Activated CD8-positive, alpha-beta T cell treated with anti-CD3 and anti-CD28 coated beads for 36 hours (primary cell): ENCODE measurements at regions of chr10 and their contacts with region 1.

Region 1: GRCh38 chr10:91298224-91298871 is 77.9 kb downstream of the PCGF5 start:
- DNase-seq: peak; percentile 86
- ATAC-seq: peak; percentile 95
- H3K4me3 Mint-ChIP-seq: peak overlapping the region; percentile 59
- H3K27ac Mint-ChIP-seq: no peak overlapping the region
- H3K4me1 Mint-ChIP-seq: peaks cover 9% of the 10 kb centered on the region
- H3K27me3 Mint-ChIP-seq: peaks cover 9% of the 10 kb centered on the region
- CTCF ChIP-seq: peak; percentile 92

Region 2: DNA sequence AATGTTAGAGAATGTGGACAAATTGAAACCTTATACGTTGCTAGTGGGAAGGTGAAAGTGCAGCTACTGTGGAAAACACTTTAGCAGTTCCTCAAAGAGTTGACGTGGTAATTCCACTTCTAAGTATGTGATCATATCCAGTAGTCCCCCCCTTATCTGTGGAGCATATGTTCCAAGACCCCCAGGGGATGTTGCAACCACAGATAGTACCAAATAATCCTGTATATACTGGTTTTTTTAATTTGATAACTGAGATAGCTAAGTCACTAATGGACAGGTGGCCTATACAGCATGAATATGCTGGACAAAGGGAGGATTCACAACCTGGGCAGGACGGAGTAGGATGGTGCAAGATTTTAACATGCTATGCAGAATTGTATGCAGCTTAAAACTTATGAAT is 41.0 kb before region 1 on chr10:
- CTCF ChIA-PET with region 1: interaction called, 13 read pairs
- POLR2A ChIA-PET with region 1: no interaction called
- intact Hi-C with region 1: no loop called
- DNase-seq: no peak
- ATAC-seq: no peak
- H3K4me3 Mint-ChIP-seq: no peak overlapping the region
- H3K27ac Mint-ChIP-seq: no peak overlapping the region
- H3K4me1 Mint-ChIP-seq: no peaks in the 10 kb centered on the region
- H3K27me3 Mint-ChIP-seq: no peaks in the 10 kb centered on the region
- CTCF ChIP-seq: no peak

Region 3: DNA sequence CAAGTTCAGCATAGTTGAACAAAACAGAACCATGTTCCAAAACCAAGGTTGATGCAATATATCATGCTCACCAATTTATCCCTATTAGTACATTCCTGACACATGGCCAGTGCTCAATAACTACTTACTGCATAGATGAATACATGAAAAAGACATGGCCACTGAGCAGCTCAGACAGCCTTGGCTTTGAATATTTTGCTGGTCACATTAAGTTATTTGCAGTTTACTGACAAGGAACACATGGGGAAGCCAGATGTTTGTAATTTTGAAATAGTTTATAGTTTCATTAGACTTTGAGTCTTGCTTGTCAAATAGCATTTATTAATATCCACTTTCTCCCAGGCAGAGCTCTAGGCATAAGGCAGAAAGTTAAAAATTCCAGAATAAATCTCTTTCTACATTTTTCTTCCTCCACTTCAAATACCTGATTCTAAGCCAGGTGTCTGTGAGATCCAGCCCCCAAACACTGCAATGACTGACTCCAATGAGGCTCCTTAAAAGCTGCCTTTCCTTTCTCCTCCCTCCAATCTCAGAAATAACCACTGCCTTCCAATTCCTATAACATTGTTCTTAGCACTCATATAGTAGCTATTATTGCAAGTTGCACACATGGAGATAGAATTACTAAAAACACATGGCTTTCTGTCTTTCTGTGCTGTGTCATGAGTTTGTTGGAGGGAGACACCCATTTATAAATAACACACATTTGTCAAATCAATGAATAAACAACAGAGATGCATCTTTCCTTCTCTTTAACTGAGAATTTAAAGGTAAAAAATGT is 13.4 kb after region 1 on chr10:
- CTCF ChIA-PET with region 1: interaction called, 51 read pairs
- POLR2A ChIA-PET with region 1: interaction called, 4 read pairs
- intact Hi-C with region 1: no loop called
- DNase-seq: no peak
- ATAC-seq: no peak
- H3K4me3 Mint-ChIP-seq: no peak overlapping the region
- H3K27ac Mint-ChIP-seq: no peak overlapping the region
- H3K4me1 Mint-ChIP-seq: peaks cover 5% of the 10 kb centered on the region
- H3K27me3 Mint-ChIP-seq: peaks cover 9% of the 10 kb centered on the region
- CTCF ChIP-seq: no peak

Region 4: DNA sequence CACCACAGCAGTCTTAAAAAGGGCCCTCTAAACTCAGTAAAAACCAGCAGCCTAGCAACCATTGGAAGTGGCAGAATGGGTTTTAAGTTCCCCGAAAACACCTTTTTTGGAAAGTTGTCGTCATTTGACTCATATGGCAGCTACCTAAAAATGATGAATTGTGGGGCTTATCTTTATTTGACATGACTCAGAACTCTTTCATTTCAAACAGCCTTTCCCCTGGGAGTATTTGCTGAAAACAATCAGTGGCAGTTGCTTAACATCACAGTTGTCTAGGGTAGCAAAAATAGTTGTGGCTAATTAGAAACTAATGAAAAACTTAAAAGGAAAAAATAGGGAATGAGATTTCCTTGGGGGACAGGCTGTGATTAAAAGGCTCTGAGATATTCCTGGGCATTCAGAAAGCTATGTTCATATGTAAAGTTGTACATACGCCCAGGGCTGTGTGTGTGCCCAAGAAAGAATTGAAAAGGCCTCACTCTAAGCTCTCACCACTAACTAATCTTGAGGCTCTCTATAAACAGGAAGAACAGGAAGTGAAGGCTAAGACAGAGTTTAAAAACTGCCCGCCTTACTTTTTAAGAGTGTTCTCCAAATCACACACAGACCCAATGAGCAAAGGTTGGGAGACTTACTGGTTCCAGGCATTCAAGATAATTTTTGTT is 30.1 kb after region 1 on chr10:
- CTCF ChIA-PET with region 1: no interaction called
- POLR2A ChIA-PET with region 1: no interaction called
- intact Hi-C with region 1: no loop called
- DNase-seq: no peak
- ATAC-seq: no peak
- H3K4me3 Mint-ChIP-seq: no peak overlapping the region
- H3K27ac Mint-ChIP-seq: no peak overlapping the region
- H3K4me1 Mint-ChIP-seq: no peaks in the 10 kb centered on the region
- H3K27me3 Mint-ChIP-seq: peaks cover 6% of the 10 kb centered on the region
- CTCF ChIP-seq: no peak

Region 5: DNA sequence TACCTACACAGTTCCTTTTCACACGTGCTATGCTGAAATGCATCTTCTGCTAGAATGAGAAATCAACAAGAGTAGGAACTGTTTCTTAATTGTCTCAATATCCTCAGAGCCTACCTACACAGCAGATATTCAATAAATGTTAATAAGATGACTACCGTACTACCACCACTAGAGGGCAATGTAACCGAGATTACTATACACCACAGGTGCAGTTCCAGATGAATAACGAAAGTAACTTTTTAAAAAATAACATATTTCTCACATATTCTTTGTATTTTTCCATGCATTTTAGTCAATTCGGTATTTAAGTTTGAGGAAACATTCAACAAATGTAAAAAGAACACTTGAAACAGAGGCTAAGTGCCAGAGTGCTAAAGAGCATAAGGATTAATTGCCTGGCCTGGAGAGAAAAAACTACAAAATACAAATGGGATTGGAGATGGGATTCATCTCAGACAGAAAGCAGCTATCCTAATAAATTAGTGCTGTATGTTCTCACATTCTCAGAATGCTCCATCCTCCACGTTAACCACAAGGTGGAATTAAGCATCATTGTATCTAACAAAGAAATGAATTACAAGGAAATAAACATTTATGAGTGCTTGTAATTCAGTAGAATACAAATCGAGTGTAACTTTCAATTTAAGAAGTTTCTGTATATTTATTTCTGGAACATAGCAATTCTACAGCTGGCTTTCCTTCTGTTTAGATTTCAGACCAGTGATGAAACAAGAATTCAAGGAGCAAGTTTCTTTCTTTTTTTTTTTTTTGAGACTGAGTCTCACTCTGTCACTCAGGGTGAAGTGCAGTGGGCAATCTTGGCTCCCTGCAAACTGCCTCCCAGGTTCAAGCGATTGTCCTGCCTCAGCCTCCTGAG is 91.5 kb after region 1 on chr10:
- CTCF ChIA-PET with region 1: interaction called, 28 read pairs
- POLR2A ChIA-PET with region 1: no interaction called
- intact Hi-C with region 1: loop called (anchors 5 kb)
- DNase-seq: no peak
- ATAC-seq: peak; percentile 87
- H3K4me3 Mint-ChIP-seq: no peak overlapping the region
- H3K27ac Mint-ChIP-seq: no peak overlapping the region
- H3K4me1 Mint-ChIP-seq: peaks cover 5% of the 10 kb centered on the region
- H3K27me3 Mint-ChIP-seq: peaks cover 24% of the 10 kb centered on the region
- CTCF ChIP-seq: peak; percentile 76

Region 6: DNA sequence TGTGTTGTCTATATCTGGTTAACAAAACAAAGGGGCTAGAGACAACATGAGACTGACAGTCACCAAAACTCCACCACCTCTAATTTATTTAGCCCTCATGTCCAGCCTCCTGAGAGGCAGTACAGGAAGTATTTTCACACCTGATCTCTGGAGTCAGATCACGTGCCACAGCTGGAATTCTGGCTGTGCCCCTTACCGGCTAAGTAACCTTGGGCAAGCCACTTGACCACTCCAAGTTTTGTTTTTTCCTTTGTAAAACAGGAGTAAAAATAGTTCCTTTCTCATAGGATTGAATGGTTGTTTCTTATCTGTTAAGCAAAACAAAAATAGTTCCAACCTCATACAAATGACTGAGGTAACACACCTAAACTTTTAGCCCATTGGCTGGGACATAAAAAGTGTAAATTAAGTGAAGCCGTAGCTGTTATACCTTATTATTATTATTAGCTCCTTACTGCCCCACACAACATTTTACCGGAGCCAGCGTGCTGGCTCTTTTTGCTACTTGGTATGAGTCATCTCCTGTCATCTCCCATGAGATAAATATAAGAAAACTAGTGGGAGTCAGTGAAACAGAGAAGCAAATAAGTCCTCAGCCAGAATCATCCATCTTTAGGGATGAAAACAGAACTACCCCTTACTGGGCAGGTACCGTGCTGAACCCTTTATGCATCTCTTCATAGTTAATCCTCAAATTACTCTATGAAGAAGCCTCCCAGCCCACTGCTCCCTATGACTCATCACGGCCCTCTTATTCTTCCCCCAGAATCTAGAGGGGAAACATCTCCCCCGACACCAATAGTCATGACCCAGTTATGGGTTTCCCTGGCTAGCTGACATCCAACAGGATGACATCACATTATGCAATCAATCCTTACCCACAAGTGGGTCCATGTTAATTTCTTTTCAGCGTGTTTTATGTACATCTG is 289.6 kb after region 1 on chr10:
- CTCF ChIA-PET with region 1: no interaction called
- POLR2A ChIA-PET with region 1: no interaction called
- intact Hi-C with region 1: no loop called
- DNase-seq: no peak
- ATAC-seq: no peak
- H3K4me3 Mint-ChIP-seq: no peak overlapping the region
- H3K27ac Mint-ChIP-seq: no peak overlapping the region
- H3K4me1 Mint-ChIP-seq: no peaks in the 10 kb centered on the region
- H3K27me3 Mint-ChIP-seq: peaks cover 31% of the 10 kb centered on the region
- CTCF ChIP-seq: no peak

Region 7: DNA sequence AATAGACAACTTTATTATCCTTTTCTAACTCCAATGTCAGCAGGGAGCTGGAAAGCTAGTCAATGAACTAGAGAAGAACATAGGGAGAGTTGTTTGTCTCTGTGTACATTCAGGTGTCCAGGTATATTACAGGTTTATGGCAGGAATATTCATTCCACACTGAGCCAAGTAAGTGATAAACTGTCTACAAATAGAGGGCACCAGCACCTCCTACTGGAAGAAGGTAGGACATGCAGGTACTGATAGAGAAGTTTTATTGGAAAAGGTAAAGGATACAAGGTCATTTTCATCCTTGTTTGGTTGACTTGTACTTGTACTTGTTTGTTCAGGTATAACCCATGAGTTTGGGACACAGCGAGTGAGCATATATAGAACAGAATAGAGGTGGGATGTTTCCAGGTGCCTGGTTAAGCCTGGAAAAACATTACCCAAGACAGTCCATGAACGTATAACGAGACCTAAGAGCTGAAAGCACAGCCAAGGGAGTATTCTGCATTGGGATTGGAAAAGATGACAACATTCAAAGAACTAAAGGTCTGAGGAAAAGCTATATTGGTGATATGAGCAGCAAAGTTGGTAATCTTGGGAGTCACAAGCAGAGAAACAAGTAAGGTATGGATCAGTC is 395.9 kb after region 1 on chr10:
- CTCF ChIA-PET with region 1: interaction called, 23 read pairs
- POLR2A ChIA-PET with region 1: no interaction called
- intact Hi-C with region 1: no loop called
- DNase-seq: peak; percentile 32
- ATAC-seq: peak; percentile 45
- H3K4me3 Mint-ChIP-seq: no peak overlapping the region
- H3K27ac Mint-ChIP-seq: no peak overlapping the region
- H3K4me1 Mint-ChIP-seq: peaks cover 4% of the 10 kb centered on the region
- H3K27me3 Mint-ChIP-seq: peaks cover 4% of the 10 kb centered on the region
- CTCF ChIP-seq: peak; percentile 71